ENCODE measurements at regions of chr19 and their contacts with region 1.

Region 1: GRCh38 chr19:50590191-50590590 is 22.0 kb upstream of the LRRC4B start:
- DNase-seq: no peak
- H3K4me3 Mint-ChIP-seq: no peak overlapping the region
- H3K27ac Mint-ChIP-seq: no peak overlapping the region
- H3K4me1 Mint-ChIP-seq: no peaks in the 10 kb centered on the region
- H3K27me3 Mint-ChIP-seq: peaks cover 80% of the 10 kb centered on the region
- CTCF ChIP-seq: no peak

Region 2: GRCh38 chr19:50511068-50511822 is 78.9 kb before region 1 on chr19 and contains the start of gene JOSD2:
- CTCF ChIA-PET with region 1: no interaction called
- intact Hi-C with region 1: no loop called
- DNase-seq: peak; percentile 98
- H3K4me3 Mint-ChIP-seq: peak within 1 kb of the TSS; percentile 84
- H3K27ac Mint-ChIP-seq: peak within 1 kb of the TSS; percentile 92
- H3K4me1 Mint-ChIP-seq: peaks cover 13% of the 10 kb centered on the region
- H3K27me3 Mint-ChIP-seq: peaks cover 51% of the 10 kb centered on the region
- CTCF ChIP-seq: no peak
- total RNA-seq, gene JOSD2: 33.5 and 38.6 TPM in 2 replicates

Region 3: DNA sequence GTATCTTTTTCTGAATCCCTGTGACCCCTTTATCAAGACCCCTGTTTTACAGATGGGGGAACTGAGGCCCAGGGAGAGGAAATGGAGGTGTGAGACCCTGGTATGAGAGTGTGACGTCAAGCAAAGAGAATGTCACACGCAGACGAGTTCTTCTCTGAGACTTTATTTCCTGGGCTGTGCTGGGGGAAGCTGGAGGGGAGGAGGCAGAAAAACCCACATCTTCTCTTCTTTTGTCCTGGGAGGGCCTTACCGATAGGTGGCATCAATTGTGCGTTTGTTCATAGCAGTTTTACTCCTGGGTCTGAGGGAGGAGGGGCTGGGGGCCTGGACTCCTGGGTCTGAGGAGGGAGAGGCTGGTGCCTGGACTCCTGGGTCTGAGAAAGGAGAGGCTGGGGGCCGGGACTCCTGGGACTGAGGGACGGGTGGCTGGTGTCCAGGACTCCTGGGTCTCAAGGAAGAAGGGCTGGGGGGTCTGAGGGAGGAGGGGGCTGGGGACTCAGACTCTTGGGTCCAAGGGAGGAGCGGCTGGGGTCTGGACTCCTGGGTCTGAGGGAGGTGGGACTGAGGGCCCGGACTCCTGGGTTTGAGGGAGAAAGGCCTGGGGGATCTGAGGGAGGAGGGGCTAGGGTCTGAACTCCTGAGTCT is 248.2 kb after region 1 on chr19:
- CTCF ChIA-PET with region 1: interaction called, 14 read pairs
- intact Hi-C with region 1: no loop called
- DNase-seq: peak; percentile 27
- H3K4me3 Mint-ChIP-seq: no peak overlapping the region
- H3K27ac Mint-ChIP-seq: no peak overlapping the region
- H3K4me1 Mint-ChIP-seq: peaks cover 12% of the 10 kb centered on the region
- H3K27me3 Mint-ChIP-seq: peaks cover 87% of the 10 kb centered on the region
- CTCF ChIP-seq: peak; percentile 47